ENCODE measurements at regions of chr6 and their contacts with region 1.

Region 1: DNA sequence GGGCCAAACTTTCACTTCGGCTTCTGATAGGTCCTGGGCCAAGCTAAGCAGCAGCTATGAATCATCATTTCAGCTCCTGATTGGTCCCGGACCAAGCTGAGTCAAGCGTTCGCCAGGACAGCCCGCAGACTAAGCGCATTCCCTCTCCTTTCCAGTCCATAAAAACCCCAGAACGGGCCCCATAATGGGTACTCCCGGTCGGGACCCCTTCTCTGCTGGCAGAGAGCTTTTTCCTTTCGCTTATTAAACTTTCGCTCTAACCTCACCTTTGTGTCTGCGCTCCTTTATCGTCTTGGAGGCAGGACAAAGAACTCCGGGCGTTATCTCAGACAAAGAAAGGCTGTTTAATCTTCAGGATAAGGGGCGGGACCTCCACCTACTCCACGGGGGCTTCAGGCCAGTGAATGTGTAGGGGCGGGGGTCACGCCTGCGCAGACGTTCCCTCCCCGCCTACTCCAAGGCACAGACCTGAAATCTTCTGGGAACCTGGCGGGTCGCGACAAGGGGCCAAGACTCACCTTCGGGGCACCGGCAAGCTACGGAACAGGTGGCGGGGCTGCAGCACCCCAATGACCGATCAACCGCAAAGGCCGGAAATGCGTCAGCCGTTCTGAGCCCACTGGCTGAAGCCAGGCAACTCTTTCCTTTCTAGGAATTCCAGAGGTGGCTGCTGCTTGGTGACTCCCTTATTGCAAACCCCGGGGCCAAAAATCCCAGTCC is at the start of gene ZSCAN31:
- DNase-seq: peak; percentile 90 to 94
- ATAC-seq: peak; percentile 98 to 99
- H3K4me3 ChIP-seq: peak within 1 kb of the TSS; percentile 78 to 91 (median 84)
- H3K27ac ChIP-seq: peak within 1 kb of the TSS; percentile 90 to 99 (median 97)
- H3K4me1 ChIP-seq: peaks cover 11 to 13% of the 10 kb centered on the region in 2 donors
- H3K27me3 ChIP-seq: no peaks in the 10 kb centered on the region
- CTCF ChIP-seq: no peak
- POLR2A ChIP-seq: peak; percentile 64 to 78
- total RNA-seq, gene ZSCAN31: 2.4 to 14.1 (median 7.5) TPM

Region 2: GRCh38 chr6:27205375-27206278 is 1130.1 kb before region 1 on chr6:
- in situ Hi-C with region 1: no loop called
- intact Hi-C with region 1: no loop called
- DNase-seq: no peak
- ATAC-seq: no peak
- H3K4me3 ChIP-seq: no peak overlapping the region
- H3K27ac ChIP-seq: no peak overlapping the region
- H3K4me1 ChIP-seq: no peaks in the 10 kb centered on the region
- H3K27me3 ChIP-seq: peaks cover 27 to 42% (median 39%) of the 10 kb centered on the region in 3 donors
- CTCF ChIP-seq: no peak
- POLR2A ChIP-seq: no peak

Region 3: DNA sequence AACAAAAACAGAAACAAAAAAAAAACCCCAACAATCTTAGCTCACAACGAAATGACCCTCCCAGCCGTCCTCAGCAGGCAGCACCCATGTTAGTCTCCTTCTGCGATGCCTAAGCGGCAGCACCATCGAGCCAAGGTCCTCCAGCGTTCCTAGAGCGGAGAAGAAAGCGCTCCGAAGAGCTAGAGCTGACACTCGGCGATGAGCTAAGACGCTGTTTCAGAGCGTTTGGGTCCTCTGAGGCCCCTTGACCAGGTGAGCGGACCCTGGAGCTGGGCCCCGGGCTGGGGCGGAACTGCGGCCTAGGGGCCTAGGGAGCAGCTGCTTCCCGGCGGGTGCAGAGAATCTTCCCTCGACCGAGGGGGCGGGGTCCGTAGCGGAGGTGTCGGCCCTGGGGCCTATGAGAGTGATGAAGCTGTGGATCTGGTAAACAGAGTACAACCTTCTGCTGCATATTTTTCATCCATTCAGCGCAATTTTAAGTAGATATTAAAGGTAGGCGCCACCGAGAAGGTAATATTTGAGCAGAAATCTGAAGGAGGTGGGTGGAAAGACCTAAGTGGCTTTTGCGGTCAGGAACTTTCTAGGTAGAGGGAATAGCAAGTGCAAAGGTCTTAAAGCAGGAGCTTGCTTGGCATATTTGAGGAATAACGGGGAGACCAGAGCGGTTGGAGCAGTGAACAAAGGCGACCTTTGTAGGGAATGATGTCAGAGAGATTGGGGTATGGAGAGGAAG is 68.6 kb before region 1 on chr6 and contains the start of gene ZSCAN26:
- in situ Hi-C with region 1: no loop called
- intact Hi-C with region 1: loop called (anchors 5 kb)
- DNase-seq: peak; percentile 64 to 71
- ATAC-seq: peak; percentile 97 to 99
- H3K4me3 ChIP-seq: peak within 1 kb of the TSS; percentile 70 to 98 (median 92)
- H3K27ac ChIP-seq: peak within 1 kb of the TSS; percentile 76 to 81 (median 80)
- H3K4me1 ChIP-seq: peaks cover 15 to 27% of the 10 kb centered on the region in 2 donors
- H3K27me3 ChIP-seq: no peaks in the 10 kb centered on the region
- CTCF ChIP-seq: no peak
- POLR2A ChIP-seq: peak in 1 of 2 donors; percentile 22
- total RNA-seq, gene ZSCAN26: 7.3 to 13.4 (median 9.8) TPM

Region 4: DNA sequence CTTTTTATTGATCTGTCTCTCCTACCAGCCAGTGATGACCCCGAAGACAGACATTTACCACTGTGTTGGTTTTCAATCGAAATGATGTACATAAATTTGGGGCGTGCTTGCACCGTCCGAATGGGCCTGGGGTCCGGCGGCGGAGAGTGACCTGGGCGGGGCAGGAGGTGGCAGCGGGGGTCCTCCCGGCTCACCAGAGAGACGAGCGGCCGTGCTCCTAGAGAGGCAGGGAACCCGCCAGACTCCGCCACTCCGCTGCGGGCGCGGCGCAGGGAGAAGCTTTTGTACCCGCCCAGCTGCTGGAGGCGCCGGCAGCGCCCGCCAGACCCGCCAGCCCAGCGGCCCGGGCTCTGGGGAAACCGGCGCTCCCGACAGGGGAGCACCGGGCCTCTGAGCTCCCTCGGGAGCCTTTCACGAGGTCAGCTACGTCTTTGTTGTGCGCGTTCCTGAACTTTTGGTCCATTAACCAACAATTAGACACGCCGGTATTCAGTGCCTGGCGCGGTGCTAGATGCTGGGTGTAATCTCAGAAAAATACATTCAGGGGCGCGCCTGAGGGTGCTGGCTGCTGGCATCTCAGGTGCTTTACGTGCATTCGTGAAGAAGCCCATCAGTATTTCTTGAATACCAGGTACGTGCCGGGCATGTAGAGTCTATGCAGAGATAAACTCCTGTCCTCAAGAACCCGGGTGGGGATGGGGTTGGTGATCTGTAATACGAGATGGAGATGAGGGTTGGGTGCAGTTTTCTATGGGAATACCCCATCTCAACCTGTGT is 54.2 kb before region 1 on chr6 and contains the start of gene PGBD1:
- in situ Hi-C with region 1: no loop called
- intact Hi-C with region 1: loop called (anchors 5 kb)
- DNase-seq: peak; percentile 9 to 36
- ATAC-seq: peak; percentile 68 to 85
- H3K4me3 ChIP-seq: peak within 1 kb of the TSS; percentile 60 to 83 (median 73)
- H3K27ac ChIP-seq: peak within 1 kb of the TSS in 2 of 4 donors; percentile 21 to 47
- H3K4me1 ChIP-seq: peaks cover 9 to 12% of the 10 kb centered on the region in 2 donors
- H3K27me3 ChIP-seq: no peaks in the 10 kb centered on the region
- CTCF ChIP-seq: no peak
- POLR2A ChIP-seq: no peak
- total RNA-seq, gene PGBD1: 0.80 to 2.8 (median 1.5) TPM

Region 5: GRCh38 chr6:29516108-29516507 is 1180.4 kb after region 1 on chr6:
- in situ Hi-C with region 1: no loop called
- intact Hi-C with region 1: no loop called
- DNase-seq: no peak
- ATAC-seq: no peak
- H3K4me3 ChIP-seq: no peak overlapping the region
- H3K27ac ChIP-seq: no peak overlapping the region
- H3K4me1 ChIP-seq: no peaks in the 10 kb centered on the region
- H3K27me3 ChIP-seq: no peaks in the 10 kb centered on the region
- CTCF ChIP-seq: no peak
- POLR2A ChIP-seq: no peak

Measured in gastrocnemius medialis (tissue), 4 donors.